Caco-2 (cell line): ENCODE measurements at regions of chr18 and their contacts with region 1.

Region 1: DNA sequence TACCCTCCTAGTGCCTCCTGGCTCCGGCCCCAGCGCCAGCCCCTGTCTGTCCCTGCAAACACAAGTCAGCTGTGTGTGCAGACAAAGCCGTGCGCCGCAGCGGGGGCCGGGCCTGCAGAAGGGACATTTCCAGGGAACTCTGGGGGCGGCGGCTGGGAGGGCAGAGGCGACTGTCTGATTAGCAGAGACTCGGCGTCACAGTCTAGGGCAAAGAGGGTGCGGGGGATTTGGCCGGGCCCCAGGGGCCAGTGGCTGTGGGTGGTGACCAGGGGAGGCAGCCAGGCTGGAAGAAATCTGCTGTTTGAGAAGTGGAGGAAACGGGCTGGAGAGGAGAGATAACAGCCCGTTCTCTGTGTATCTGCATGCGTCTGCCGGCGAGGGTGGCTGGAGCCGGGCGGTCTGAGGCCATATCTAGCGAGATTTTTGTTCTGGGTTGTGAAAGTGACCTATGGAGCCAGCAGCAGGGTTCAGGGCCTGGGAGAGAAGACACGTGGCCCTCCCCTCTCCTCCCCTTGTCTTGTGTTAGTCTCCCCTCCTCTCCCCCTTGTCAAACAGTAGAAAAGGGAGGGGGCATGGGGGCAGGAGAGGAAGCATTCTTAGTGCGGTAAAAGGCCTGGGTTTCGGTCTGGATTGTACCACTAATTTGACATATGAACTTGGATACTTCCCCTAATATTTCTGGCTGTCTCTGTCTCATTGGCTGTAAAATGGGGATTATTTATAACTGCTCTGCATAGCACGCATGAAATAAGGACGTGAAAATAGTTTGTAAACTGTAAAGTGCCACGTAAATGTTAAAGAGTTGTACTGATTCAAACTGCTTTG is 169.4 kb downstream of the SMAD7 start:
- DNase-seq: peak; percentile 62 to 77
- H3K4me3 ChIP-seq: peak overlapping the region; percentile 15; the same call in 1 of the 2 replicates
- H3K4me3 Mint-ChIP-seq: peak overlapping the region; percentile 70
- H3K27ac Mint-ChIP-seq: peak overlapping the region; percentile 82
- H3K4me1 ChIP-seq: peaks cover 20% of the 10 kb centered on the region
- H3K4me1 Mint-ChIP-seq: no peaks in the 10 kb centered on the region
- H3K27me3 ChIP-seq: no peaks in the 10 kb centered on the region
- H3K27me3 Mint-ChIP-seq: no peaks in the 10 kb centered on the region
- CTCF ChIP-seq: no peak

Region 2: DNA sequence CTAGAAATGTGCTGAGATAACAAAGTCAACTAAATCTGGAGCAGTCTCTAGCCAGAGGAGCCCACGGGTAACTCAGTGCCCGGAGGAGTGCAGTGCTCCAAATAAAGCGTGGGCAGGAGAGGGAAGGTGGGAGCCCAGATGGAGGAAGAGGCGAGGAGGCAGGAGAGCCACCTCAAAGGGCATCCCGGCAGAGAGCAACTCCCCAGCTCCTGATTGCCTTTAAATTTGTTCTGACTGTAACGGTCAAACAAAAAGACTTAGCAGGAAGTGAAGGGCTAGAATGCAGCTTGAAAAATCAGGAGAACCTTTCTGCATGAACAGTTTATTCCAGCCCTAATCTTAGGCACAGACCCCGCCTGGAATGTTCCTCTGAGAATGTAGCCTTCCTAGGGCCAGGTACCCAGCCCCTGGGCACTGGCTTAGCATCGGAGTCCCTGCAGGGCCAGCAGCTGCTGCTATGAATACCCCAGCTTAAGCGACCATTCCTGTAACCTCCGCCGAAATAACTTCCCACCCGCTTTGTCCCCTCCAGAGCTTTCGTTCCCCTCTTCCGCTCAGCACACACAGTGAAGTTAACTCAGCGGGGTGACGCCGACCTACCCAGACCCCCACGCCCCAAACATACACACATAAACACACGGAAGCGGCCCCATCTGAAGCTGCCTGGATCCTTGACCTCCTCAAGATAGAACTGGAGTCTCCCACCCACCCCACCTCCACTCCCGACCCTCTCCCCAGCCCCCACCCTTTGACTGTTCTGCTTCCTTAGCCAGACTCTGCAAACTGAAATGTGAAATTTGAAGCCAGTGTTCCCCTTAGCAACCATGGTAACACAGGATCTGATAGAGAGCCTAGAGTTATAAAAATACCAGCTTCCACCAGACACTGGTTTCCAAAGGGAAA is 46.2 kb after region 1 on chr18:
- CTCF ChIA-PET with region 1: interaction called, 3 read pairs
- POLR2A ChIA-PET with region 1: no interaction called
- intact Hi-C with region 1: loop called (anchors 2 kb)
- DNase-seq: peak in 1 of 2 experiments; percentile 4
- H3K4me3 ChIP-seq: no peak overlapping the region
- H3K4me3 Mint-ChIP-seq: no peak overlapping the region
- H3K27ac Mint-ChIP-seq: peak overlapping the region; percentile 67
- H3K4me1 ChIP-seq: peaks cover 9% of the 10 kb centered on the region; the same call in 1 of the 2 replicates
- H3K4me1 Mint-ChIP-seq: peaks cover 19% of the 10 kb centered on the region
- H3K27me3 ChIP-seq: no peaks in the 10 kb centered on the region
- H3K27me3 Mint-ChIP-seq: no peaks in the 10 kb centered on the region
- CTCF ChIP-seq: no peak

Region 3: GRCh38 chr18:48868468-48869466 is 87.4 kb after region 1 on chr18:
- CTCF ChIA-PET with region 1: no interaction called
- POLR2A ChIA-PET with region 1: no interaction called
- intact Hi-C with region 1: loop called (anchors 1 kb)
- DNase-seq: peak; percentile 42 to 48
- H3K4me3 ChIP-seq: no peak overlapping the region
- H3K4me3 Mint-ChIP-seq: no peak overlapping the region
- H3K27ac Mint-ChIP-seq: peak overlapping the region; percentile 70
- H3K4me1 ChIP-seq: 0 out of 2 replicates have a peak, but pooled peaks cover 5% of the 10 kb centered on the region
- H3K4me1 Mint-ChIP-seq: peaks cover 8% of the 10 kb centered on the region
- H3K27me3 ChIP-seq: no peaks in the 10 kb centered on the region
- H3K27me3 Mint-ChIP-seq: no peaks in the 10 kb centered on the region
- CTCF ChIP-seq: no peak

Region 4: GRCh38 chr18:49021433-49022129 is 240.2 kb after region 1 on chr18:
- CTCF ChIA-PET with region 1: no interaction called
- POLR2A ChIA-PET with region 1: no interaction called
- intact Hi-C with region 1: loop called (anchors 2 kb)
- DNase-seq: peak; percentile 66 to 69
- H3K4me3 ChIP-seq: no peak overlapping the region
- H3K4me3 Mint-ChIP-seq: peak overlapping the region; percentile 53
- H3K27ac Mint-ChIP-seq: peak overlapping the region; percentile 78
- H3K4me1 ChIP-seq: peaks cover 19% of the 10 kb centered on the region; the same call in 1 of the 2 replicates
- H3K4me1 Mint-ChIP-seq: peaks cover 9% of the 10 kb centered on the region
- H3K27me3 ChIP-seq: no peaks in the 10 kb centered on the region
- H3K27me3 Mint-ChIP-seq: no peaks in the 10 kb centered on the region
- CTCF ChIP-seq: peak in 1 of 2 experiments; percentile 38